B cell (primary cell): ENCODE measurements at regions of chr4 and their contacts with region 1.

Region 1: GRCh38 chr4:8428293-8429097 is 12.0 kb downstream of the ACOX3 start:
- DNase-seq: peak; percentile 93
- ATAC-seq: peak; percentile 95
- H3K4me3 ChIP-seq: peak overlapping the region; percentile 46 to 97 (median 63)
- H3K4me3 Mint-ChIP-seq: peak overlapping the region; percentile 98
- H3K27ac ChIP-seq: peak overlapping the region; percentile 28 to 78
- H3K27ac Mint-ChIP-seq: peak overlapping the region; percentile 97
- H3K4me1 ChIP-seq: peaks cover 15 to 16% of the 10 kb centered on the region in 2 donors
- H3K4me1 Mint-ChIP-seq: peaks cover 25% of the 10 kb centered on the region
- H3K27me3 ChIP-seq: no peaks in the 10 kb centered on the region
- H3K27me3 Mint-ChIP-seq: no peaks in the 10 kb centered on the region
- CTCF ChIP-seq: no peak

Region 2: GRCh38 chr4:7564242-7564641 is 864.3 kb before region 1 on chr4:
- CTCF ChIA-PET with region 1: no interaction called
- POLR2A ChIA-PET with region 1: no interaction called
- intact Hi-C with region 1: no loop called
- DNase-seq: no peak
- ATAC-seq: no peak
- H3K4me3 ChIP-seq: no peak overlapping the region
- H3K4me3 Mint-ChIP-seq: no peak overlapping the region
- H3K27ac ChIP-seq: no peak overlapping the region
- H3K27ac Mint-ChIP-seq: no peak overlapping the region
- H3K4me1 ChIP-seq: no peaks in the 10 kb centered on the region
- H3K4me1 Mint-ChIP-seq: no peaks in the 10 kb centered on the region
- H3K27me3 ChIP-seq: no peaks in the 10 kb centered on the region
- H3K27me3 Mint-ChIP-seq: no peaks in the 10 kb centered on the region
- CTCF ChIP-seq: no peak

Region 3: DNA sequence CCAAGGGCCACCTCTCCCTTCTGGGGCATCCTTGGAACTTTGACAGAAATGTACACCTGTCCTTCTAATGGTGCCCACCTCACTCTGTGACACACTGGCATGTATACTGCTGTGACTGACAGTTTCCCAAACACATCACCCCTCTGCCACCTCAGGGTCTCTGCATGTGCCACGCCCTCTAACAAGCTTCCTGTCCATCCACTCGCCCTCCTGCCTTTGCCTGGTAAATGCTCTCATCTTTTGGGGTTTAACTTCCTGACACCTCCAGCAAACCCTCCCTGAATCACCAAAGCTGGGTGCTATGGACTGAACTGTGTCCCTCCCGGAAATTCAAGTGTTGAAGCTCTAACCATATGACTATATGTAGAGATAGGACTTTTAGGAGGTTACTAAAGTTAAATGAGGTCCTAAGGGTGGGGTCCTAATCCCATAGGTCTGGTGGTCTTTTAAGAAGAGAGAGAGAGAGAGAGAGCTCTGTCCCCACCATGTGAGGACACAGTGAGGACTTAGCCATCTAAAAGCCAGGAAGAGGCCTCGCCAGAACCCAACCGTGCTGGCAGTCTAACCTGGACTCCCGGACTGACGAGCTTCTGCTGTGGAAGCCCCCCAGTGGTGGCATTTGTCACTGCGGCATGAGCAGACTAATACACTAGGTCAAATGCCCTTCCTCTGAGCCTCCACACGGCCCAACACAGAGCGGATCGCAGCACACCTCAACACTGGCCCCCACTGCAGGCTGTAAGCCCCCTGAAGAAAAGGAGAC is 584.5 kb before region 1 on chr4:
- CTCF ChIA-PET with region 1: no interaction called
- POLR2A ChIA-PET with region 1: no interaction called
- intact Hi-C with region 1: no loop called
- DNase-seq: peak; percentile 27
- ATAC-seq: peak; percentile 39
- H3K4me3 ChIP-seq: no peak overlapping the region
- H3K4me3 Mint-ChIP-seq: no peak overlapping the region
- H3K27ac ChIP-seq: no peak overlapping the region
- H3K27ac Mint-ChIP-seq: no peak overlapping the region
- H3K4me1 ChIP-seq: no peaks in the 10 kb centered on the region
- H3K4me1 Mint-ChIP-seq: no peaks in the 10 kb centered on the region
- H3K27me3 ChIP-seq: no peaks in the 10 kb centered on the region
- H3K27me3 Mint-ChIP-seq: peaks cover 9% of the 10 kb centered on the region
- CTCF ChIP-seq: peak; percentile 65

Region 4: GRCh38 chr4:8101213-8102075 is 327.1 kb before region 1 on chr4:
- CTCF ChIA-PET with region 1: no interaction called
- POLR2A ChIA-PET with region 1: no interaction called
- intact Hi-C with region 1: no loop called
- DNase-seq: no peak
- ATAC-seq: no peak
- H3K4me3 ChIP-seq: no peak overlapping the region
- H3K4me3 Mint-ChIP-seq: no peak overlapping the region
- H3K27ac ChIP-seq: no peak overlapping the region
- H3K27ac Mint-ChIP-seq: no peak overlapping the region
- H3K4me1 ChIP-seq: no peaks in the 10 kb centered on the region
- H3K4me1 Mint-ChIP-seq: no peaks in the 10 kb centered on the region
- H3K27me3 ChIP-seq: no peaks in the 10 kb centered on the region
- H3K27me3 Mint-ChIP-seq: no peaks in the 10 kb centered on the region
- CTCF ChIP-seq: no peak

Region 5: DNA sequence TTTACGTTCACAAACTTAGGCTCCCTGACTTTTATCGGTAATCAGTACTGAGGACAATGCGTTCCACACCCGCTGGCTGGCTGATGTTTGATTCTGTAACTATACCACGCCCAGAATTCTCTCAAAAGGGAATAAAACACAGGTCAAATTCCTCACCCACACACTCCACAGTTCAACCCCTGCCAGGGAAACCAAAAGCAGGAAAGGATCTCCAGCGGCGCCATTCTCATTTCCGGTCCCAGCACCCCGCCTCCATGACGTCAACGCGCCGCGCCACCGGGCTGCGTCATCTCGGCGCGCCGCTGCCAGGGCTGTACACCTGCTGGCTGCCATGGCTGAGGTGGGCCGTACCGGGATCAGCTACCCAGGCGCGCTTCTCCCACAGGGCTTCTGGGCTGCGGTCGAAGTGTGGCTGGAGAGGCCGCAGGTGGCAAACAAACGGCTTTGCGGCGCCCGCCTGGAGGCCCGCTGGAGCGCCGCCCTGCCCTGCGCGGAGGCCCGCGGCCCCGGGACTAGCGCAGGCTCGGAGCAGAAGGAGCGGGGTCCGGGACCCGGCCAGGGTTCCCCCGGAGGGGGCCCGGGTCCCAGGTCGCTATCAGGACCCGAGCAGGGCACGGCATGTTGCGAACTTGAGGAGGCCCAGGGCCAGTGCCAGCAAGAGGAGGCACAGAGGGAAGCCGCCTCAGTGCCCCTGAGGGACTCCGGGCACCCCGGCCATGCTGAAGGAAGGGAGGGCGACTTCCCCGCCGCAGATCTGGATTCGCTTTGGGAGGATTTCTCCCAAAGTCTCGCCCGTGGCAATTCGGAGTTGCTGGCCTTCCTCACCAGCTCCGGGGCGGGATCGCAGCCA is 12.2 kb after region 1 on chr4 and contains the starts of genes ACOX3 and TRMT44:
- CTCF ChIA-PET with region 1: interaction called, 19 read pairs
- POLR2A ChIA-PET with region 1: interaction called, 12 read pairs
- intact Hi-C with region 1: loop called (anchors 1 kb)
- DNase-seq: peak; percentile 96
- ATAC-seq: peak; percentile 88
- H3K4me3 ChIP-seq: peak within 1 kb of the TSS; percentile 80 to 100 (median 100)
- H3K4me3 Mint-ChIP-seq: peak within 1 kb of the TSS; percentile 100
- H3K27ac ChIP-seq: peak within 1 kb of the TSS; percentile 96 to 97
- H3K27ac Mint-ChIP-seq: peak within 1 kb of the TSS; percentile 100
- H3K4me1 ChIP-seq: peaks cover 35 to 40% of the 10 kb centered on the region in 2 donors
- H3K4me1 Mint-ChIP-seq: peaks cover 60% of the 10 kb centered on the region
- H3K27me3 ChIP-seq: no peaks in the 10 kb centered on the region
- H3K27me3 Mint-ChIP-seq: no peaks in the 10 kb centered on the region
- CTCF ChIP-seq: no peak
- total RNA-seq, gene ACOX3: 20.7 and 23.1 TPM in 2 replicates
- total RNA-seq, gene TRMT44: 34.8 and 37.4 TPM in 2 replicates